B cell (primary cell): ENCODE measurements at regions of chr7 and their contacts with region 1.

Region 1: DNA sequence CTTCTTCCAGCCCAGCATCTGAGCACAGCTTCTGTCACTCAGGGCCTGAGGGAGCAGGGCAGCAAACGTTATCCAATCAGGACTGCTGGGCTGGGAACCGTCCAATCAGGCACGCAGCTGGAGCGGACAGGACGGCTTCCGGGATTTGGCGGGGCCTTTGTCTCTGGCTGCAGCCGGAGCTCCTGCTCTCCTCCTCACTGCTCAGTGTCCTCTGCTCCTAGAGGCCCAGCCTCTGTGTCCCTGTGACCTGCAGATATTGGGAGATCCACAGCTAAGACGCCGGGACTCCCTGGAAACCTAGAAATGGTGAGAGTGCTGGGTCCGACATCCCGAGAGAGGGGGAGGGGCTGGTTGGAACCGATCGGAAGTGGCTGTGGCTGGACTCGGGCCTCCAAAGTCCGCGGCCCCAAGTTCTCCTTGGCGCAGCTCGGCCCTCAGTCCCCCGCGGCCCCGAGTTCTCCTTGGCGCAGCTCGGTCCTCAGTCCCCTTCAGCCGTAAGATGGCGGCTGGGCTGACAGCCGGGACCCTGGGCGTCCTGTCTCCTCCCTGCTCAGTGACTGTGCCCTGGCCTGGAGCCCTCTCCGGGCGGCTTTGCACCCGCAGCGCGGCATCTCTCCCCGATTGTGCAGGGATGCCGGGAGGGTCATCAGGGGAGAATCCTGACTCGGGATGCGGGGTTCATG is at the start of gene ZNF107:
- DNase-seq: peak; percentile 88
- ATAC-seq: peak; percentile 96
- H3K4me3 ChIP-seq: peak within 1 kb of the TSS; percentile 70 to 100 (median 96)
- H3K4me3 Mint-ChIP-seq: peak within 1 kb of the TSS; percentile 97
- H3K27ac ChIP-seq: peak within 1 kb of the TSS; percentile 92 to 96
- H3K27ac Mint-ChIP-seq: peak within 1 kb of the TSS; percentile 97
- H3K4me1 ChIP-seq: peaks cover 35 to 37% of the 10 kb centered on the region in 2 donors
- H3K4me1 Mint-ChIP-seq: peaks cover 59% of the 10 kb centered on the region
- H3K27me3 ChIP-seq: no peaks in the 10 kb centered on the region
- H3K27me3 Mint-ChIP-seq: no peaks in the 10 kb centered on the region
- CTCF ChIP-seq: no peak
- total RNA-seq, gene ZNF107: 70.7 and 73.7 TPM in 2 replicates

Region 2: DNA sequence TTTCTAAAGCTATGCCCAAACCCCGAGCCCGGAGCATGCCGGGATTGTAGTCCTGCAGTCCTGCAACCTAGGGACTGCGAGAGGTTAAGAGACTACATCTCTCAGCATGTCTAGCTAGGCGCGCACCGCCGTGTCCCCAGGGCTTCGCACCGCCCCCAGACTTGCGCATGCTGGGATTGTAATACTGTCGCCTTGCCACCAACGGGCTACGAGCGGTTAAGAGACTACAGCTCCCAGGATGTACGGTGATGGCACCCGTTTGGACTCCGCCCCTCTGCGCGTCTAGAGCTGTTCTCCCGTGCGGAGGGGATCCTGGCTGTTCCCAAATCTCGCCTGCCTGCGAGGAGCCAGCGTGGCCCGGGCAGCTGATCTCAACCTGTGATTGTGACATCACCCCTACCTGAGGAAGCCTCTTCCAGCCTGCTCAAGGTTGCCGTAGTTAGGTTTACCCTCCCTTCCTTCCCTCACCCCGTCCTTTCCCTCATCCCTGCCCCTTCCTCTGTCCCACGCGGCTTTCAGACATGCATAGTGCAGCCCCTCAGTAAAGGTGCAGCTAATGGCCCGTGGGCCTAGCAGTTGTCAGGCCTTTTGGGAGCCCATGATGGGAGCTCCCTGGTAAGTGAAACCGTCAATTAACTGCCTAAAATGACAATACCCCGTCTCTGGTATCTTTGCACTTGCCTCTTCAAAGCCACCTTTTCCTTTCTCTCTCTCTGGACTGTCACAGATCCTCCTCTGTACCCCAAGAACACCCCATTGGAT is 358.7 kb before region 1 on chr7:
- CTCF ChIA-PET with region 1: interaction called, 3 read pairs
- POLR2A ChIA-PET with region 1: interaction called, 4 read pairs
- intact Hi-C with region 1: loop called (anchors 1 kb)
- DNase-seq: peak; percentile 96
- ATAC-seq: peak; percentile 94
- H3K4me3 ChIP-seq: peak overlapping the region; percentile 55 to 87 (median 75)
- H3K4me3 Mint-ChIP-seq: peak overlapping the region; percentile 90
- H3K27ac ChIP-seq: peak overlapping the region; percentile 82 to 92
- H3K27ac Mint-ChIP-seq: peak overlapping the region; percentile 88
- H3K4me1 ChIP-seq: peaks cover 24 to 30% of the 10 kb centered on the region in 2 donors
- H3K4me1 Mint-ChIP-seq: peaks cover 37% of the 10 kb centered on the region
- H3K27me3 ChIP-seq: no peaks in the 10 kb centered on the region
- H3K27me3 Mint-ChIP-seq: no peaks in the 10 kb centered on the region
- CTCF ChIP-seq: no peak

Region 3: DNA sequence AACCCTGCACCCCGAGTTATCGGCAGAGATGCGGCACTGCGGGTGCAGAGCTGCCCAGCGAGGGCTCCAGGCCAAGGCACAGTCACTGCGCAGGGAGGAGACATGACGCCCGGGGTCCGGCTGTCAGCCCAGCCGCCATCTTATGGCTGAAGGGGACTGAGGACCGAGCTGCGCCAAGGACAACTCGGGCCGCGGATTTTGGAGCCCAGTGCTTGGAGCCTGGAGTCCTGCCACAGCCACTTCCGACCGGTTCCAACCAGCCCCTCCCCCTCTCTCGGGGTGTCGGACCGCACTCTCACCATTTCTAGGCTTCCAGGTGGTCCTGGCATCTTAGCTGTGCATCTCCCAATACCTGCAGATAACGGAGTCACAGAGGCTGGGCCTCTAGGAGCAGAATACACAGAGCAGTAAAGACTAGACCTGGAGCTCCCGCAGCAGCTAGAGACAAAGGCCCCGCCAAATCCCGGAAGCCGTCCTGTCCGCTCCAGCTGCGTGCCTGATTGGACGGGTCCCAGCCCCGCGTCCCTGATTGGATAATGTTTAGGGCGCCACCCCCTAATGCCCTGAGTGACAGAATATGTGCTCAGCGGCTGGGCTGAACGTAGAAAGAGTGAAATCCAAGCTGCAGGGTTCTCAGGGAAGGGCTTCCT is 103.4 kb before region 1 on chr7 and contains the start of gene ZNF680:
- CTCF ChIA-PET with region 1: no interaction called
- POLR2A ChIA-PET with region 1: no interaction called
- intact Hi-C with region 1: loop called (anchors 1 kb)
- DNase-seq: peak; percentile 88
- ATAC-seq: peak; percentile 99
- H3K4me3 ChIP-seq: peak within 1 kb of the TSS; percentile 68 to 99 (median 91)
- H3K4me3 Mint-ChIP-seq: peak within 1 kb of the TSS; percentile 100
- H3K27ac ChIP-seq: peak within 1 kb of the TSS; percentile 54 to 74
- H3K27ac Mint-ChIP-seq: peak within 1 kb of the TSS; percentile 96
- H3K4me1 ChIP-seq: peaks cover 0 to 13% of the 10 kb centered on the region in 2 donors
- H3K4me1 Mint-ChIP-seq: peaks cover 30% of the 10 kb centered on the region
- H3K27me3 ChIP-seq: no peaks in the 10 kb centered on the region
- H3K27me3 Mint-ChIP-seq: no peaks in the 10 kb centered on the region
- CTCF ChIP-seq: no peak
- total RNA-seq, gene ZNF680: 27.3 and 27.8 TPM in 2 replicates

Region 4: GRCh38 chr7:64706625-64707292 is 40.6 kb after region 1 on chr7:
- CTCF ChIA-PET with region 1: no interaction called
- POLR2A ChIA-PET with region 1: no interaction called
- intact Hi-C with region 1: loop called (anchors 5 kb)
- DNase-seq: no peak
- ATAC-seq: no peak
- H3K4me3 ChIP-seq: peak overlapping the region in 1 of 5 experiments; percentile 9
- H3K4me3 Mint-ChIP-seq: no peak overlapping the region
- H3K27ac ChIP-seq: no peak overlapping the region
- H3K27ac Mint-ChIP-seq: no peak overlapping the region
- H3K4me1 ChIP-seq: no peaks in the 10 kb centered on the region
- H3K4me1 Mint-ChIP-seq: no peaks in the 10 kb centered on the region
- H3K27me3 ChIP-seq: no peaks in the 10 kb centered on the region
- H3K27me3 Mint-ChIP-seq: no peaks in the 10 kb centered on the region
- CTCF ChIP-seq: no peak

Region 5: GRCh38 chr7:65006094-65006992 is 340.2 kb after region 1 on chr7 and contains the start of gene ERV3-1:
- CTCF ChIA-PET with region 1: no interaction called
- POLR2A ChIA-PET with region 1: no interaction called
- intact Hi-C with region 1: loop called (anchors 1 kb)
- DNase-seq: peak; percentile 95
- ATAC-seq: peak; percentile 99
- H3K4me3 ChIP-seq: peak within 1 kb of the TSS; percentile 60 to 89 (median 87)
- H3K4me3 Mint-ChIP-seq: peak within 1 kb of the TSS; percentile 95
- H3K27ac ChIP-seq: peak within 1 kb of the TSS; percentile 84 to 96
- H3K27ac Mint-ChIP-seq: peak within 1 kb of the TSS; percentile 91
- H3K4me1 ChIP-seq: peaks cover 20 to 33% of the 10 kb centered on the region in 2 donors
- H3K4me1 Mint-ChIP-seq: peaks cover 46% of the 10 kb centered on the region
- H3K27me3 ChIP-seq: no peaks in the 10 kb centered on the region
- H3K27me3 Mint-ChIP-seq: no peaks in the 10 kb centered on the region
- CTCF ChIP-seq: no peak
- total RNA-seq, gene ERV3-1: 29.1 and 30.7 TPM in 2 replicates